Activated naive CD4-positive, alpha-beta T cell treated with anti-CD3 and anti-CD28 coated beads, Interleukin-2, amount 10 ng/mL, durations not matched to agents 7 days and 5 days (primary cell): ENCODE measurements at regions of chr14 and their contacts with region 1.

Region 1: DNA sequence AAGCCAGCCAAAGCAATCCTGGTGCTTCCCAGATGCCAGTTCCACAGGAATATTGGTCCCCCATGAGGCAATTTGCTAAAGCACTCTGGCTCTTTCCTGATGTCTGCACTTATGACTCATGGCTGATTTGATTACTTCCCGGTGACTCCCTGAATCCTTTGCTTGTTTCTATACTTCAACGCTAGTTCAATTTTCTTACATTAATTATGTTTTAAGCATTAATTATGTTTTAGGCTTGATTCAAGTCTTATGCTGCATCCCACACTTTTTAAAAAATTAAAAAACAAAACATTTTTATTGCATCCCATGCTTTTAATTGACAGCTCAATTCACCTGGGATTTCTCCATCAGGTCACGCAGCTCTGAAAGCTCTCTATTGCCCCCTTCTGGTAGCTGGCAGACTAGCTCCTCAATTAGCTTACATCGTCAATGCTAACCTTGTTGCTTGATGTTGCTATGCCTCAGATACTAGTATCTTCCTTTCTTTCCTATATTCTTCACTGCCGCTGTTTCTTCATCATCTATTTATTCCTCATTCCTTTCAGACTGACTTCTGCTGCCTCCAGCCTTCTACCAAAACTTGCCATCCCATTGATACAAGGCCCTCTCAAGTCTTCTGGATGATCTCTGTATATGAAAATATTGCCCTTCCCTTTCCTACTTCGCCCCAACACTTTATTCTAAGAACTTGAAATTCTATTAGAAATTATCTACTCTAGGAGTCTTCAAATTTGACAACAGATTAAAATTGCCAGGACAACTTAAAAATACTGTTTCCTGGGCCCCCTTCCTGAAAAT is 32.0 kb downstream of the TSHR start:
- DNase-seq: peak; percentile 79
- H3K4me3 Mint-ChIP-seq: no peak overlapping the region
- H3K27ac Mint-ChIP-seq: no peak overlapping the region
- H3K4me1 Mint-ChIP-seq: peaks cover 14% of the 10 kb centered on the region
- H3K27me3 Mint-ChIP-seq: peaks cover under 1% of the 10 kb centered on the region

Region 2: DNA sequence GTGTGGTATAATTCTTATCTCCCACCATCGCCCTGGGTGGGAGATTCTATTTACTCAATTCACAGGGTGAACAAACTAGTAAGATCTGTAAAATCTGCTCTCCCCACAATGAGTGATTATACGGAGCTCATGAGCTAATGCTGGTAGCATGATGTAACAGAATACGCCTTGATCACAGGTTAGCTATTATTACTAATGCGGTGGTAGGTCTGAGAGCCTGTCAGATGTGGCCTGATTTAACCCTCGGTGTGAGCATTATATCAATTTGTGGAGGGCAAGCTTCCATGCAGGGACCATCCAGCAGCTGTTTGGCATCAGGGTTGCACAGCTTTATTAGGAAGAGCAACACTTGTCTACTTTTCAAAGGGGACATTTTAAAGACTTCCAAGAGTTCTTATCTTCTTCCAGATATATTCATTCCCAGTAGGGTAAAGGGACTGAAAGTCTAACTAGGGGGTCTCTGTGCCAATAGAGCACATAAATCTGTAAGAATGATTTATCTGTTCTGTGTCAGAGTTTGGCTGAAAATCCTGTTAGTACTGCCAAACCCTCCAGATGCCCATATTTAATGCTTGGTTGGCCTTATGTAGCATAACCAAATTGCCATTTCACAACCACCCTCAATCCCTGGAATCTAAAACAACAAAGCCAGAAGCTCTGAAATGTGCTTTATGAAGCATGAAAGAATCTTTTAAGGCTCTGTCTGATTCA is 13.3 kb before region 1 on chr14:
- CTCF ChIA-PET with region 1: interaction called, 63 read pairs
- DNase-seq: no peak
- H3K4me3 Mint-ChIP-seq: no peak overlapping the region
- H3K27ac Mint-ChIP-seq: no peak overlapping the region
- H3K4me1 Mint-ChIP-seq: peaks cover 45% of the 10 kb centered on the region
- H3K27me3 Mint-ChIP-seq: peaks cover 11% of the 10 kb centered on the region

Region 3: GRCh38 chr14:81164167-81164774 is 176.8 kb after region 1 on chr14:
- CTCF ChIA-PET with region 1: interaction called, 15 read pairs
- DNase-seq: peak; percentile 67
- H3K4me3 Mint-ChIP-seq: no peak overlapping the region
- H3K27ac Mint-ChIP-seq: no peak overlapping the region
- H3K4me1 Mint-ChIP-seq: peaks cover 23% of the 10 kb centered on the region
- H3K27me3 Mint-ChIP-seq: no peaks in the 10 kb centered on the region